Activated naive CD4-positive, alpha-beta T cell treated with anti-CD3 and anti-CD28 coated beads, Interleukin-2, amount 10 ng/mL, durations not matched to agents 7 days and 5 days (primary cell): ENCODE measurements at regions of chr12 and their contacts with region 1.

Region 1: DNA sequence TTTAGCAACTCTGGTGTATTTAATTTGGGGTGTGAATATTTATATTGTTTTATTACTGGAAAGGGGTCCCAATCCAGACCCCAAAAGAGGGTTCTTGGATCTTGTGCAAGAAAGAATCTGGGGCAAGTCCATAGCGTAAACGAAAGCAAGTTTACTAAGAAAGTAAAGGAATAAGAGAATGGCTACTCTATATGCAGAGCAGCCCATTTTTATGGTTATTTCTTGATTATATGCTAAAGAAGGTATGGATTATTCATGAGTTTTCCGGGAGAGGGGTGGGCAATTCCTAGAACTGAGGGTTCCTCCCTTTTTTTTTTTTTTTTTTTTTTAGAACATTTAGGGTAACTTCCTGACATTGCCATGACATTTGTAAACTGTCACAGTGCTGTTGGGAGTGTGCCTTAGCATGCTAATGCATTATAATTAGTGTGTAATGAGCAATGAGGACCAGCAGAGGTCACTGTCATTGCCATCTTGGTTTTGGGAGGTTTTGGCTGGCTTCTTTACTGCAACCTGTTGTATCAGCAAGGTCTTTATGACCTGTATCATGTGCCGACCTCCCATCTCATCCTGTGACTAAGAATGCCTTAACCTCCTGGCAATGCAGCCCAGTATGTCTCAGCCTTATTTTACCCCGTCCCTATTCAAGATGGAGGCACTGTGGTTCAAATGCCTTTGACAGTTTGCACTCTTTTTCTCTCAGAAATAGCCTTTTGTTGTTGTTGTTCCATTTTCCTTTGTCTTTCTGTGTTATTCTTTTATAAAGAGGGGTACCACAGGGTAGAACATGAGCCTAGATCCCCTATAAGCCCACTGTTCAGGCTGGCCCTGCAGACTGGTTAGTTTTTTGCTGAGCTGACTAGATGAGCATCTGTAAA is 75.5 kb upstream of the DCD start:
- DNase-seq: peak; percentile 44
- H3K4me3 Mint-ChIP-seq: no peak overlapping the region
- H3K27ac Mint-ChIP-seq: no peak overlapping the region
- H3K4me1 Mint-ChIP-seq: peaks cover 32% of the 10 kb centered on the region
- H3K27me3 Mint-ChIP-seq: peaks cover 21% of the 10 kb centered on the region

Region 2: DNA sequence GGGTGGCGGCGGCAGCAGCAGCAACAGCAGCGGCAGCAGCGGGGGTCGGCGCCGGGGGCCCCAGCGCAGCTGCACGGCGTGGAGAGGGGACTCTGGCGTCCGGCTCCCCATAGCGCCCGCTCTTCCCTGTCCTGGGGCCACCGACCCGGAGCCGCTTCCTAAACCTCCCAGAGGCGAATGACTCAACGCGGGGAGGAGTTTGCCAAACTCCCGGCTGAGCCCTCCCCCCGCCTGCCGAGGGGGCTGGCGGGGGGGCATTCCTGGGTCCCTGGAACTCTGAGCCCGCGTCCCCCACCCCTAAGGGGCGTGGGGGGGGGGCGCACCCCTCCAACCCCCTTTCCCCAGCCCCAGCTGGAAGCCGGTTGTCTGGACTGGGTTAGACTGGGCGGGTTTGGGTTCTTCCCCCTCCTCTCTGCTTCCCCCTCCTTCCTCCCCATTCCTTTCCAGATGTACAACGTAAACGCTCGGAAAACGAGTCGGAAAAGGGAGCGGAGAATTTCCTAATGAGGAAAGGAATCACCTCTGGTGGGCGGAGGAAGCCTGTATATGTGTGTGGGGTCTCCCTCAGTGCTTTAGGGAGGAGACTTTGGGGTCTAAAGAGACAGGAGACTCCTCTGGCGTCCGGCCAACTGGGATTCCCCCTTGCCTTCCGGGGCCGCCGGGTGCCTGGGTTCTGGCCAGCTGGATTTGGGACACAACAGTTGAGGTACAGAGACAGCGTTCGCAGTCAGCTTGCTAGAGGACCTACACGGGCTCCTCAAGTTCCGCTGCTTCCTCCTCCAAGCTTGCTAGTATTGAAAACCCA is 304.3 kb before region 1 on chr12 and contains the start of gene ITGA5:
- CTCF ChIA-PET with region 1: no interaction called
- DNase-seq: peak; percentile 59
- H3K4me3 Mint-ChIP-seq: peak within 1 kb of the TSS; percentile 83
- H3K27ac Mint-ChIP-seq: peak within 1 kb of the TSS; percentile 92
- H3K4me1 Mint-ChIP-seq: peaks cover 58% of the 10 kb centered on the region
- H3K27me3 Mint-ChIP-seq: peaks cover 51% of the 10 kb centered on the region

Region 3: DNA sequence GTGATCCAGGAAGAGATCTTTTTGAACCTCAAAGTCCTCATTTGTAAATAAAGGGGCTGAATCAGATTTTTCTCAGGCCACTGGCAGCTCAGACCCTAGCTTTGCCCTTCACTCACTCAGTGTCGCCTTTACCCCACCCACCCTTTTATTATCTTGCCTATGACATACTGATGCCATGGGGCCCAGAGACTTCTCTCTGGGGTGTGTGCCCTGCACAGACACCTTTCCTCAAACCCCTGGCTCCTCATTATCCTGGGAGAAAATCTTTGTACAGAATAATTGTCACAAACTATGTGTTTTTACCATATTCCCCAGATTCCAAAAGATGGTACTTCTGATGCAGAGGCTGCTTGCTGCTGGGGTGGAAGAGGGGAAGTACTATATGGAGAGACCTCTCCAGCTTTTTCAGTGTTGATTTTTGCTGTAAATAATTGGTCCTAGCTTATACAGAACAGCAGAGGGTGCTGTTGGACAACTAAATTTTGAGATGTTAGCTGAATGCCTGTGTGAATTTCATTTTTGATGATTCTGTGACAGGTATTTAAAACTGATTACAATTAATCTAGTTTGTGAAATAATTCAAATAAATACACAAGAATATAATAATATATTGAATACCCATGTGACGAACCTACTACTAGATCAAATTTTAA is 21.6 kb before region 1 on chr12:
- CTCF ChIA-PET with region 1: interaction called, 11 read pairs
- DNase-seq: no peak
- H3K4me3 Mint-ChIP-seq: no peak overlapping the region
- H3K27ac Mint-ChIP-seq: no peak overlapping the region
- H3K4me1 Mint-ChIP-seq: no peaks in the 10 kb centered on the region
- H3K27me3 Mint-ChIP-seq: peaks cover 12% of the 10 kb centered on the region